ENCODE measurements at regions of chr5 and their contacts with region 1.

Region 1: DNA sequence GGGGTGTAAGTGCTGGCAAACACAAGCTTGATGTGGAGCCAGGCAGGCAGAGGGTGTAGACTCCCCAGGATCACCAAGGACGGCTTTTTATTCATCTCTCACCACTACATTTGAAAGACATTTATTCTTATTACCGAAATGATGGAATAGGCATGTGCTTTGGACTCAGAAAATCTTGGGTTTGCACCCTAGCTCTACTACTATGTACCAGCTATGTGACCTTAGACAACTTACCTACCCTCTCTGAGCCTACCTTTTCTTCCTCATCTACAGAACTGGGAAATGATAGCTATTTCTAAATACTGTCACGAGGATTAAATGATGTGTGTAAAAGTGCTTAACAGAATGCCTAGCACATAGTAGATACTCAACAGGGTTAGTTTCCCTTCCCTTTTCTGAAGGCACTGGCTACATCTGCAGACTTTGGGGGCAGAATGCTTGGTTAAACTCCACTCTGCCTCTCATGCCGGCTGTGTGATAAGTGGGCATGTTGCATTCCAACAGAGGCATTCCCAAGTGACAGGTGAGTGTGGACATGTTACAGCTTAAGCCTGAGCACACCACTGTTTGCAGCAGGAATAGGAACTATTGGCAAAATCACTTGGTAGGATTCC is 94.8 kb downstream of the SLC1A3 start:
- DNase-seq: no peak
- H3K4me3 Mint-ChIP-seq: no peak overlapping the region
- H3K27ac Mint-ChIP-seq: no peak overlapping the region
- H3K4me1 Mint-ChIP-seq: no peaks in the 10 kb centered on the region
- H3K27me3 Mint-ChIP-seq: peaks cover 13% of the 10 kb centered on the region

Region 2: DNA sequence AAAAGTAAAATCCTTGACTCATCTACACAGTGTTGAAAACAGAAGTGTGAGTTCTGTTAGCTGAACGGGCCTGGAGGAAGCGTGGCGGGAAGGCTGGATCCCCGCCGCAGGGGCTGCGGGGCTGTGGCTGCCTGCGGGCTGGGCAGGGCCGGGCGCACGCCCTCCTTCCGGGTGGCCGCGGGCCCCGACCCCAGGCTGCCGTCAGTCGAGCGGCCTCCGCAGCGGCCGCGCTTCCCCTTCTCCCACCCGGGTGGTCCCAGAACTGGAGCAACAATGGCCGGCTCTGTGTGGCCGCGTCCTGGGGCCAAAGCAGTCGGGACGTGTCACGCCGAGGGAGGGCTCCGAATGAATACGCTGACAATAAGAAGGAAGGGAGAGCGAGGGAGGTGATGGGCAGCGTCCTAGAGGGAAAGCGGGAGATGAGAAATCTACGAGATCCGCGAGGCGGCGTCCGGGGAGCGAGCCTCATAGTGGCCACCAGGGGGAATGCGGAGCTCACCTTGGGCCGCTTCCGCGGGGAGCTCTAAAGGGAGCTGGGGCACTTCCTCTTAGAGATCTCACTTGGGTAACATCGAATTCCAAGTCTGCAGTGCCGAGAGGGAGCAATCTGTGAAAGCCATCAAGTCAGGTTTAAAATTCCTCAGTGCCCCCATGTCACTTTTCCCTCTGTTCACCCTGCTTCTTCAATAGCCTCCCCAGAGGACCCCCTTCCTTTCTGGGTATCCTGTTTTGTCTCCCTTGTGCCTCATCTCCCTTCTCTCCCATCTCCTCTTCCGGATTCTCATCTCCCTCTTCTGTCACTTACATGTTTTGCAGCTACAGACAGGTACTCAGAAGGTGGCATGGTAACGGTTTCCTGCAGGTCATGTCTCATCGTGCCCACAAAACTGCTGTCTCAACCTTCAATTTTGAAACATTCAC is 10.9 kb before region 1 on chr5:
- CTCF ChIA-PET with region 1: interaction called, 21 read pairs
- POLR2A ChIA-PET with region 1: no interaction called
- DNase-seq: peak; percentile 63
- H3K4me3 Mint-ChIP-seq: peak overlapping the region; percentile 74
- H3K27ac Mint-ChIP-seq: no peak overlapping the region
- H3K4me1 Mint-ChIP-seq: peaks cover 10% of the 10 kb centered on the region
- H3K27me3 Mint-ChIP-seq: peaks cover 29% of the 10 kb centered on the region